ENCODE measurements at regions of chr1 and their contacts with region 1.

Region 1: DNA sequence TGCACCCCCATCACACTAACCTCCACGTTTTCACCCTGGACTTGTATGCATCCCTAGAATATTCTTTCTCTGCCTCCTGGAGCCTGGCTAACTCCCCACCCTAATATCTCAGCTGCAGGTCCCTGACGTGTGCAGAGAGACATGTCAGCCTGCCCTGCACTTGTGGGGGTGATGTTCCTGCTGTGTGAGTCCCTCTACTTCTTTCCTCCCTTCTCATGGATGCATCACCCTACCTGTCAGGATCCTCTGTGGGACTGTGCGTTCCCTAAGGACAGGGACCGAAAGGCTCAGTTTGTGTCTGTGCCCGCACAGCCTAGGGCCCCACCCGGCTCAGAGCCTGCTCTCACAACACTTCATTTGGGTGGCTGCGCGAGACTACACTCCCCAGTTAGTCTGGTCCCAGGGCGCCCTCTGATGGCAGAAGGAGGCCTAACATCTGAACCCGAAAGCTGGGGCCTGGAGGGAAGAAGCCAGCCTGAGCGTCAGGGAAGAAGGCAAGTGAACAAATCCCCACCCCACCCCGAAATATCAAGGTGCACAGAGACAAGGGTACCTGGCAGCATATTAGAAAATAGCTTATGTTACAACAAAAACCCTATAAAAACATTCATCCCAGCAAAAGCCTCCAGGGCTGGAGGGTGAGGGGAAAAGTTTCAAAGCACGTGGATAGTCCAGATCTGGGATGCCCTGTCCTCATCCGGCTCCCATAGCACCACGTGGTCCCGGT is 3.7 kb downstream of the CD52 start:
- DNase-seq: peak; percentile 91
- ATAC-seq: peak; percentile 71
- H3K4me3 Mint-ChIP-seq: peak overlapping the region; percentile 87
- H3K27ac Mint-ChIP-seq: peak overlapping the region; percentile 98
- H3K4me1 Mint-ChIP-seq: peaks cover 69% of the 10 kb centered on the region
- H3K27me3 Mint-ChIP-seq: no peaks in the 10 kb centered on the region
- CTCF ChIP-seq: peak; percentile 32

Region 2: GRCh38 chr1:26102526-26102925 is 219.0 kb before region 1 on chr1:
- CTCF ChIA-PET with region 1: interaction called, 3 read pairs
- POLR2A ChIA-PET with region 1: no interaction called
- intact Hi-C with region 1: loop called (anchors 1 kb)
- DNase-seq: no peak
- ATAC-seq: no peak
- H3K4me3 Mint-ChIP-seq: no peak overlapping the region
- H3K27ac Mint-ChIP-seq: no peak overlapping the region
- H3K4me1 Mint-ChIP-seq: peaks cover 4% of the 10 kb centered on the region
- H3K27me3 Mint-ChIP-seq: peaks cover 14% of the 10 kb centered on the region
- CTCF ChIP-seq: no peak

Region 3: DNA sequence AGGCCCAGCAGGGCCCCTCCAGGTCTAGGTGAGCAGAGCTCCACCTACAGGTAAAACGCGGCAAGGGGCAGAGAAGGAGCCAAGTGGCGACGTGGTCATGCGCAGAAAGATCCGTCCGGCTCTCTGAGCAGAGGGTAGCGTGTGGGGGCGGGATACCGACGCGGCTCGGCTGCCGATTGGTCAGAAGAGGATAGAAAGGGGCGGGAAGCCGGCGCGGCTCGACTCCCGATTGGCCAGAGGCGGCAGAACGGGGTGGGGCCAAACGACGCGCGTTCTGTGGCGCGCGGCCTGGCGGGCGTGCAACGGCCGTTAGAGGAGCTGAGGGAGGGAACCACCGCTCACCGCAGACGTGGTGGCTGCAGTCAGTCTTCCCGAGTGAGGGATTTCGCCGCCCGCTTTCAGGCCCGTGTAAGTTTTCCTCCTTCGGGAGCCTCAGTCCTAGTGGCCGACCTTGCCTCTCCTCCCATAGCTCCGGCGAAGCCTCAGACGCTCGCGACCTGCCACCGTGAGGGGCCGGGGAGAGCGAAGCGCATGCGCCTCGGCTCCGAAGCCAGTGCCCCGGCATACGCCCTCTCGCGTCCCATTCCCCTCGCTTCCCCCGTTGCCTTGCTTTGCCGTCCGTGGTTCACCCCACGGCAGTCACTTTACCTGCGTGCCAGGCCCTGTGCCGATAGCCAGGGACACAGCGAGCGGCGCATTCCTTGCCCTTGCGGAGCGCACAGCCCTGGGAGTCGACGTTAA is 87.4 kb before region 1 on chr1 and contains the start of gene CEP85:
- CTCF ChIA-PET with region 1: interaction called, 28 read pairs
- POLR2A ChIA-PET with region 1: interaction called, 21 read pairs
- intact Hi-C with region 1: loop called (anchors 1 kb)
- DNase-seq: peak; percentile 94
- ATAC-seq: peak; percentile 88
- H3K4me3 Mint-ChIP-seq: peak within 1 kb of the TSS; percentile 98
- H3K27ac Mint-ChIP-seq: peak within 1 kb of the TSS; percentile 94
- H3K4me1 Mint-ChIP-seq: peaks cover 34% of the 10 kb centered on the region
- H3K27me3 Mint-ChIP-seq: no peaks in the 10 kb centered on the region
- CTCF ChIP-seq: no peak
- total RNA-seq, gene CEP85: 13.8 and 16.4 TPM in 2 replicates

Region 4: DNA sequence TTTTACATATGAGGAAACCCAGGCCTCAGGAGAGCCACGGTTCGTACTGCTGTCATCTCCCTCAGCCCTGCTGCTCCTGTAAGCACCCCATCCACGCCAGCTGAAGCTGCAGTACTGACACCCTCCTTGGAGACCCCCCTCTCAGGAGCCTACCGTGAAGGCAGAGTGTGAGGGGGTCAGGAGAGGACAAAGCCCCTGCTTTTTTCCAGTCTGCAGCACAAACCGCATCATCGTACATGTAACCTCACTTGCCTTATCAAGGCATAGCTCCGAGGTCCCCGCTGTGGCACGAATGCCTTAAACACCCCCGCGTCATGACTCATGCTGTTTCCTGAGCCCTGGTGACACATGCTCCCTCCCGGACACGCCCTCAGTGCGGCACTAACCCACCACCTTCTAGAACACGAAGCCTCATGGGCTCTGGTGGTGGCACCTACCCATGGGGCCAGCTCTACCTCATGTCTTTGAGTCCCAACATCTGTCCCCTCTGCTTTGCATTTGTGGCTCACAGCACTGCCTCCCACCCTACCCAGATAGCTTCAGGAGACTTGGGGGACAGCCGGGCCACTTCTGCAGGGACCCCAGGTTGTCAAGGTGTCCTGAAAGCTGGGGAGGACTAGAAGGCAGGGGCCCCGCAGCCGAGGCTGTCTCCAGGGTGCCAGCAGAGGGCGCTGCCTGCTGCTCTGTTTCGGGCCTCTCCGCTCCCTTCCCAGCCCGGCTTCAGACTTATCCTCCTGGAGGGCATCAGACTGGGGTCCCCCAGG is 36.7 kb before region 1 on chr1:
- CTCF ChIA-PET with region 1: interaction called, 372 read pairs
- POLR2A ChIA-PET with region 1: interaction called, 1,638 read pairs
- intact Hi-C with region 1: loop called (anchors 1 kb)
- DNase-seq: peak; percentile 75
- ATAC-seq: peak; percentile 54
- H3K4me3 Mint-ChIP-seq: peak overlapping the region; percentile 83
- H3K27ac Mint-ChIP-seq: peak overlapping the region; percentile 100
- H3K4me1 Mint-ChIP-seq: peaks cover 93% of the 10 kb centered on the region
- H3K27me3 Mint-ChIP-seq: no peaks in the 10 kb centered on the region
- CTCF ChIP-seq: no peak

Region 5: GRCh38 chr1:26306290-26307229 is 14.9 kb before region 1 on chr1 and contains the start of gene UBXN11:
- CTCF ChIA-PET with region 1: interaction called, 3 read pairs
- POLR2A ChIA-PET with region 1: interaction called, 28 read pairs
- intact Hi-C with region 1: no loop called
- DNase-seq: peak; percentile 81
- ATAC-seq: peak; percentile 99
- H3K4me3 Mint-ChIP-seq: peak within 1 kb of the TSS; percentile 99
- H3K27ac Mint-ChIP-seq: peak within 1 kb of the TSS; percentile 94
- H3K4me1 Mint-ChIP-seq: peaks cover 27% of the 10 kb centered on the region
- H3K27me3 Mint-ChIP-seq: no peaks in the 10 kb centered on the region
- CTCF ChIP-seq: no peak
- total RNA-seq, gene UBXN11: 35.5 and 36.9 TPM in 2 replicates

Region 6: GRCh38 chr1:26417111-26417759 is 95.8 kb after region 1 on chr1:
- CTCF ChIA-PET with region 1: interaction called, 12 read pairs
- POLR2A ChIA-PET with region 1: no interaction called
- intact Hi-C with region 1: loop called (anchors 5 kb)
- DNase-seq: peak; percentile 67
- ATAC-seq: peak; percentile 99
- H3K4me3 Mint-ChIP-seq: no peak overlapping the region
- H3K27ac Mint-ChIP-seq: no peak overlapping the region
- H3K4me1 Mint-ChIP-seq: no peaks in the 10 kb centered on the region
- H3K27me3 Mint-ChIP-seq: peaks cover 29% of the 10 kb centered on the region
- CTCF ChIP-seq: peak; percentile 35

Region 7: GRCh38 chr1:26874896-26875295 is 553.4 kb after region 1 on chr1:
- CTCF ChIA-PET with region 1: no interaction called
- POLR2A ChIA-PET with region 1: no interaction called
- intact Hi-C with region 1: no loop called
- DNase-seq: no peak
- ATAC-seq: no peak
- H3K4me3 Mint-ChIP-seq: no peak overlapping the region
- H3K27ac Mint-ChIP-seq: no peak overlapping the region
- H3K4me1 Mint-ChIP-seq: no peaks in the 10 kb centered on the region
- H3K27me3 Mint-ChIP-seq: no peaks in the 10 kb centered on the region
- CTCF ChIP-seq: no peak

Measured in activated B cell treated with CpG ODN at 0.5 μM for 24 hours (primary cell).